ENCODE measurements at regions of chr4 and their contacts with region 1.

Region 1: GRCh38 chr4:54217642-54218495 is 11.2 kb upstream of the PDGFRA start:
- H3K4me3 Mint-ChIP-seq: peak overlapping the region; percentile 52
- H3K27ac Mint-ChIP-seq: no peak overlapping the region
- H3K4me1 Mint-ChIP-seq: peaks cover 11% of the 10 kb centered on the region
- H3K27me3 Mint-ChIP-seq: peaks cover 65% of the 10 kb centered on the region

Region 2: GRCh38 chr4:53706422-53707032 is 511.3 kb before region 1 on chr4:
- intact Hi-C with region 1: loop called (anchors 5 kb)
- H3K4me3 Mint-ChIP-seq: no peak overlapping the region
- H3K27ac Mint-ChIP-seq: no peak overlapping the region
- H3K4me1 Mint-ChIP-seq: peaks cover 25% of the 10 kb centered on the region
- H3K27me3 Mint-ChIP-seq: no peaks in the 10 kb centered on the region

Region 3: DNA sequence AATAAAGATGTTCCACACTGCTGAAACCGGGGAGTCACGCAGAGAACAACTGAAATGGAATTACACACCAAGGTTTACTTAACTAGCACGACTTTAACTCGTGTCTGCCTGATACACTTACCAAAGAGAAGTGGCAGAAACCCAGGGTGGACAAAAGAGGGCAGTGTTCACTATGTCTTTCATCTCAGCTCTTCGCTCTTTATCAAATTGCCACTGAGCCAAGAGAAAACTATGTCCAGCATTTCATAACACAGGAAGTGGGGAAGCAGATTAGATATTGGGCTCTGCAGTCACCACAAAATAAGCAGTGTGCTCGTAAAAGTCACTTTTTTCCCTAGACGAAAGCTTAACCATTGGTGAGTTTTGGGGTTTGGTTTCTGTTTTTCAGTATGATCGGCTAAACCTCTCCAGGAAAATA is 309.2 kb before region 1 on chr4:
- intact Hi-C with region 1: loop called (anchors 1 kb)
- H3K4me3 Mint-ChIP-seq: peak overlapping the region; percentile 26
- H3K27ac Mint-ChIP-seq: no peak overlapping the region
- H3K4me1 Mint-ChIP-seq: peaks cover 20% of the 10 kb centered on the region
- H3K27me3 Mint-ChIP-seq: peaks cover 27% of the 10 kb centered on the region

Region 4: GRCh38 chr4:53929955-53930798 is 287.7 kb before region 1 on chr4:
- intact Hi-C with region 1: loop called (anchors 1 kb)
- H3K4me3 Mint-ChIP-seq: no peak overlapping the region
- H3K27ac Mint-ChIP-seq: no peak overlapping the region
- H3K4me1 Mint-ChIP-seq: no peaks in the 10 kb centered on the region
- H3K27me3 Mint-ChIP-seq: peaks cover 2% of the 10 kb centered on the region

Measured in dendritic cell treated with granulocyte-macrophage colony-stimulating factor and Interleukin-4, amounts not matched to agents 40 ng/mL and 50 ng/mL, for 4 days (primary cell).